ENCODE measurements at regions of chr7 and their contacts with region 1.

Region 1: DNA sequence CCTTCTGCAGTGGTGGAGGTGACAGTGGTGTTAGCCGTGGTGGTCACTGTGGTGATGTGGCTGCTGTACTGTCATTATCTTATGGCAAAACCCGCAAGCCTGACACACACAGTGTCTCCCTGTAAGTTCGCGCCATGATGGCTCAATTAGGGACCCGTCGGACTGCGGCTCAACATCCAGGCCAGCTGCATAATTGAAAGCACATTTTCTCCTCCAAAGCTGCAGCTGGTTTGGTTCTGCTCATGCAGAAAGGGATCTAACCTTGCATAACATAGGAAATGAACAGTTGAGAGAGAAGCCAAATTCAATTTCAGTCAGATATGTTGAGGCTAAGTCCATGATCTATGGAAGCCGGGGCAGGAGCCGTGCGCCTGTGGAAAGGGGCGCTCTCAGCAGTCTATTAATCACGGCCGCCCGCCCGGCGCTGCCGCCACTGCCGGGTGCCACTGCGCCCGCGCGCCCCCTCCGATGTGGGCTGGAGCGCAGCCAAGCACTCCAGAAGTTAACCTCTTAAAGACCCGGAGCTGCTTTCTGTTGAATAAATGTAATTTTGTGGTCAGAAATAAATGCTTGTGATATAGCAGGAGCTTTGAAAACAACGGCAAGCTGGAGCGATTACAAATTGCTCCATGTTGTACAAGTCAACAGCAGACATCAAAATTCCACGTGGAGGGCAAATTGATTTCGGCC is 227.7 kb downstream of the CUX1 start:
- DNase-seq: peak in 2 of 3 donors; percentile 62 to 70
- H3K4me3 ChIP-seq: peak overlapping the region in 3 of 7 experiments; percentile 25 to 49 (median 37)
- H3K27ac ChIP-seq: no peak overlapping the region
- H3K4me1 ChIP-seq: peaks cover 0 to 19% (median 16%) of the 10 kb centered on the region in 4 experiments
- H3K27me3 ChIP-seq: no peaks in the 10 kb centered on the region

Region 2: DNA sequence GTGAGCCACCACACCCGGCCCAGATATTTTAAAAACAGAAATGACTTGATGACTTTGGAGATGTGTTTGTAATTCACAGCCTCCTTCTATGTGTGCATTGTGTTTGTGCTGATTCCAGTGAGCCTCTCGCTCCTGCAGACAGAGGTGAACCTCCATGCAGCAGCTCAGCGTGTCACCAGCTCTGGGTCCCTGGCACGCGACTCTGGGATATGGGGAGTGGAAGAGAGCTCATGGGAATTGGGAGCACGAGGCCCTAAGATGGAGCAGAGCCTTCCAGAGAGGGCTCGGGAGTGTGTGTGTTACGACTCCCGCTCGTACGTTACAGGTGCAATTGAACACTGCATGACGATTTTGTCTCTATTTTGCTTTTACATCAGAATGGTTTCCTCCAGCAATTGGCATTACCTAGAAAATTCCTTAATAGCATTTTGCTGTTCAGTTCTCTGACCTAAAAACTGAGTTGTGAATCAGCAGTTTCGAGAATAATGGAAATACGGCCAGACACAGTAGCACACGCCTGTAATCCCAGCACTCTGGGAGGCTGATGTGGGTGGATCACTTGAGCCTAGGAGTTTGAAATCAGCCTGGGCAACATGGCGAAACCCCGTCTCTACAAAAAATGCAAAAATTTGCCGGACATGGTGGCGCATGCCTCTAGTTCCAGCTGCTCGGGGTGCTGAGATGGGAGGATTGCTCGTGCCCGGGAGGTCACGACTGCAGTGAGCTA is 23.1 kb before region 1 on chr7:
- CTCF ChIA-PET with region 1: no interaction called
- POLR2A ChIA-PET with region 1: no interaction called
- DNase-seq: no peak
- H3K4me3 ChIP-seq: no peak overlapping the region
- H3K27ac ChIP-seq: no peak overlapping the region
- H3K4me1 ChIP-seq: peaks cover 0 to 25% (median 14%) of the 10 kb centered on the region in 4 experiments
- H3K27me3 ChIP-seq: no peaks in the 10 kb centered on the region

Region 3: DNA sequence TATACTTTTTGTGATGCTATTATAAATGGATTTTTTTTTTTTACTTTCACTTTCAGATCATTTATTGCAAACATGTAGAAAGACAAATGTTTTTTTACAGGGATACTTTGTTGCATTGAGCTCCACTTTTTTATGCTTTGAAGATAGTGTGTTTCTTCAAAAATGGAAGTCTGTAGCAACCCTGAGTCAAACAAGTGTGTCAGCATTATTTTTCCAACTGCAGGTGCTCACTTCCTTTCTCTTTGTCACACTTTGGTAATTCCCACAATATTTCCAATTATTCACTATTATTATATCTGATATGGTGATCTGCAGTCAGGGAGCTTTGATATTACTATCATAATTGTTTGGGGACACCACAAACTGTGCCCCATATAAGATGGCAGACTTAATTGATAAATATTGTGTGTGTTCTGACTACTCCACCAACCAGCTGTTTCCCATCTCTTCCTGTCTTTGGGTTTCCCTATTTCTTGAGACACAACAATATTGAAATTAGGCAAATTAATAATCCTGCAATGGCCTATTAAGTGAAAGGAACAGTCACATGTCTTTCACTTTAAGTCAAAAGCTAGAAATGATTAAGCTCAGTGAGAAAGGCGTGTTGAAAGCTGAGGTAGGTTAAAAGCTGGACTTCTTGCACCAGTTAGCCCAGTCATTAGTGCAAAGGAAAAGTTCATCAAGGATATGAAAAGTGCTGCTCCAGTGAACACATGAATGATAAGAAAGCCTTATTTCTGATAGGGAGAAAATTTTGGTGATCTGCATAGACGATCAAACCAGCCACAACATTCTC is 10.2 kb after region 1 on chr7:
- CTCF ChIA-PET with region 1: interaction called, 12 read pairs
- POLR2A ChIA-PET with region 1: interaction called, 3 read pairs
- DNase-seq: peak in 1 of 3 donors; percentile 26
- H3K4me3 ChIP-seq: no peak overlapping the region
- H3K27ac ChIP-seq: no peak overlapping the region
- H3K4me1 ChIP-seq: no peaks in the 10 kb centered on the region
- H3K27me3 ChIP-seq: no peaks in the 10 kb centered on the region

Measured in common myeloid progenitor, CD34-positive (primary cell).